ENCODE measurements at regions of chr11 and their contacts with region 1.

Region 1: DNA sequence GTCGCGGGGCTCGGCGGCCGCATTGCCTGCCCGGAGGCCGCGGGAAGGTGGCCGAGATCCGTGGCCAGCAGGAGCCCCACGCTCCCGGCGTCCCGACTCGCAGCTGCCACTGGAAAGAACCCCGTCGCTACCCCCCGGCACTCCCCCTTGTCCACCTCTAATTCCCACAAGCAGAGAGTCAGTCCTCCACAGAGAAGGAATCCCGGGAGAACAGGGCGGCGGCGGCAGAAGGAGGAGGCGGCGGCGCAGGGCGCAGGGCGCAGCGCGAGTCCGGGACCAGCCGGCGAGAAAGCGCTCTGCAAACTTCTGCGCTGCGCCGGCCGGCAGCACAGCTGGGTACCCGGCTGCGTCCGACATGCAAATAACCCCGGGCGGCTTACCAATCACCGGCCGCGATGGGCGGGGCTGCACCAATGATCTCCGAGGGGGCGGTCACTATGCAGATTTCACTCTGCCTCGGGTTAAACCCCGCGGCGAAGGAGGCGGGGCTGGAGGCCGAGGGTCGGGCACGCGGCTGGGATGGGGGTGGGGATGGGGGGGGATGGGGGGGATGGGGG is at the start of gene ABTB2:
- DNase-seq: peak; percentile 94 to 98 (median 97)
- ATAC-seq: peak; percentile 89
- H3K4me3 ChIP-seq: peak within 1 kb of the TSS; percentile 65 to 86
- H3K4me3 Mint-ChIP-seq: peak within 1 kb of the TSS; percentile 87
- H3K27ac ChIP-seq: peak within 1 kb of the TSS; percentile 21 to 38
- H3K27ac Mint-ChIP-seq: peak within 1 kb of the TSS; percentile 74
- H3K4me1 ChIP-seq: peaks cover 22% of the 10 kb centered on the region
- H3K4me1 Mint-ChIP-seq: peaks cover 19% of the 10 kb centered on the region
- H3K27me3 ChIP-seq: peaks cover 18 to 26% of the 10 kb centered on the region in 2 experiments
- H3K27me3 Mint-ChIP-seq: peaks cover 43% of the 10 kb centered on the region
- CTCF ChIP-seq: no peak
- total RNA-seq, gene ABTB2: 2.2 to 2.7 TPM

Region 2: DNA sequence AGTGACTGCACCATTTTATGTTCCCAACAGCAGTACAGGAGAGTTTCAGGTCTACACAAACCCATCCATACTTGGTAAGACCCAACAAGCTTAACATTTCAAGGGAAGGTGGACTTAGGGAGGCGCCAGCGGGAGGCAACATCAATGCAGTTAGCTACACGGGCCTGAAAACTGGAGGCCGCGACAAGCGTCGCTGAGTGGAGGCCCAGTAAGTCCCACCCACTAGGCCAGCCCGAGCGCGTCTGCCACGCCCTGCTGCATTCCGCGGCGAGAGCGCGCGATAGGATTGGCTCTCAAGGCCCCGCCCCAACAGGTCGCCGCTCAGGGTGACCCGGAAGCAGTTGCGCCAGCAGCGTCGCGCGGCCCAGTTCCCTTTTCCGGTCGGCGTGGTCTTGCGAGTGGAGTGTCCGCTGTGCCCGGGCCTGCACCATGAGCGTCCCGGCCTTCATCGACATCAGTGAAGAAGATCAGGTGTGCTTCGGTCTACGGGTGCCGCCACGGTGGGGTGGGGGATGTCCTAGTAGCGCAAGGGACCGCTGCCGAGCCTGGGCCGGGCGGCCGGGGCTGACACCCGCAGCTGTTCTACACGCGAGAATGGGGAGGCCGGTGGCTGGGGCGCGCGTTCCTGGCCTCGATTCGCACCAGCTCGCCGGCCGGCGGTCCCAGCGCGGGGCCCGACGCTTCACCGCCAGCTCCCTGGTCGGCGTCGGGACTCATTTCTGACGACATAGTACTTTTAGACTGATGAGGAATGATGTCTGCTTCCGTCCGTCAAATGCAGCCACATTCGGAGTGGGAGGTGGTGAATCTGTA is 1774.1 kb before region 1 on chr11 and contains the start of gene EIF3M:
- CTCF ChIA-PET with region 1: no interaction called
- POLR2A ChIA-PET with region 1: no interaction called
- intact Hi-C with region 1: loop called in 1 of 2 experiments (anchors 5 kb)
- DNase-seq: peak; percentile 91 to 98 (median 95)
- ATAC-seq: peak; percentile 98
- H3K4me3 ChIP-seq: peak within 1 kb of the TSS; percentile 80 to 93
- H3K4me3 Mint-ChIP-seq: peak within 1 kb of the TSS; percentile 99
- H3K27ac ChIP-seq: peak within 1 kb of the TSS; percentile 81 to 86
- H3K27ac Mint-ChIP-seq: peak within 1 kb of the TSS; percentile 99
- H3K4me1 ChIP-seq: peaks cover 29% of the 10 kb centered on the region
- H3K4me1 Mint-ChIP-seq: peaks cover 39% of the 10 kb centered on the region
- H3K27me3 ChIP-seq: no peaks in the 10 kb centered on the region
- H3K27me3 Mint-ChIP-seq: no peaks in the 10 kb centered on the region
- CTCF ChIP-seq: no peak
- total RNA-seq, gene EIF3M: 269 to 274 TPM

Region 3: GRCh38 chr11:33700425-33701271 is 657.1 kb before region 1 on chr11 and contains the start of gene C11orf91:
- CTCF ChIA-PET with region 1: no interaction called
- POLR2A ChIA-PET with region 1: no interaction called
- intact Hi-C with region 1: loop called in 1 of 2 experiments (anchors 10 kb)
- DNase-seq: peak; percentile 88 to 96 (median 94)
- ATAC-seq: peak; percentile 95
- H3K4me3 ChIP-seq: peak within 1 kb of the TSS; percentile 51 to 68
- H3K4me3 Mint-ChIP-seq: peak within 1 kb of the TSS; percentile 92
- H3K27ac ChIP-seq: no peak within 1 kb of the TSS
- H3K27ac Mint-ChIP-seq: peak within 1 kb of the TSS; percentile 64
- H3K4me1 ChIP-seq: peaks cover 13% of the 10 kb centered on the region
- H3K4me1 Mint-ChIP-seq: peaks cover 25% of the 10 kb centered on the region
- H3K27me3 ChIP-seq: no peaks in the 10 kb centered on the region
- H3K27me3 Mint-ChIP-seq: peaks cover 2% of the 10 kb centered on the region
- CTCF ChIP-seq: no peak
- total RNA-seq, gene C11orf91: 0.54 TPM in 1 of 2 experiments, not detected in the other

Region 4: DNA sequence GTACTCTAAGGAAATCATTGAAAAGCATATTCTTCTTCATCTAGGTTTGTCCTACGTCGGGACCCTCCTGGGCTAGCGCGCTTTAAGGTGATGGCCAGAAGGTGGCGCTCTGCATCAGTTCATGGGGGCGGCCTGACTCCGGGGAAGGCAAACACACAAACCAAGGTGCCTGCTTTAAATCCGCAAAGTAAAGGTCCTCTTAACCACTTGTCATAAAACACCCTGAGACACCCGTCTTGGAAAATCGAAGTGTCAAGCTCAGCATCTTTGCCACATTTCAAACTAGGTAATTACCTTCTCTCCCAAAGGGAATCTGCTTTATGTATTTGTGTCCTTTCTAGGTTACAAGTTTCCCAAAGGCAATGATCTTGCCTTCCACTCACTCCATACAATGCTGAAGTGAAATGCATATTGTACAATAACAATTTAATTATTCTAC is 499.8 kb before region 1 on chr11:
- CTCF ChIA-PET with region 1: interaction called, 5 read pairs
- POLR2A ChIA-PET with region 1: interaction called, 4 read pairs
- intact Hi-C with region 1: loop called (anchors 1 kb)
- DNase-seq: peak; percentile 43 to 82 (median 75)
- ATAC-seq: peak; percentile 87
- H3K4me3 ChIP-seq: no peak overlapping the region
- H3K4me3 Mint-ChIP-seq: no peak overlapping the region
- H3K27ac ChIP-seq: no peak overlapping the region
- H3K27ac Mint-ChIP-seq: no peak overlapping the region
- H3K4me1 ChIP-seq: no peaks in the 10 kb centered on the region
- H3K4me1 Mint-ChIP-seq: no peaks in the 10 kb centered on the region
- H3K27me3 ChIP-seq: peaks cover 6 to 7% of the 10 kb centered on the region in 2 experiments
- H3K27me3 Mint-ChIP-seq: peaks cover 50% of the 10 kb centered on the region
- CTCF ChIP-seq: peak; percentile 81

Region 5: GRCh38 chr11:34105079-34105956 is 252.5 kb before region 1 on chr11 and contains the start of gene NAT10:
- CTCF ChIA-PET with region 1: no interaction called
- POLR2A ChIA-PET with region 1: no interaction called
- intact Hi-C with region 1: loop called in 1 of 2 experiments (anchors 1 kb)
- DNase-seq: peak; percentile 93 to 100 (median 98)
- ATAC-seq: peak; percentile 93
- H3K4me3 ChIP-seq: peak within 1 kb of the TSS; percentile 70 to 94
- H3K4me3 Mint-ChIP-seq: peak within 1 kb of the TSS; percentile 97
- H3K27ac ChIP-seq: peak within 1 kb of the TSS; percentile 81 to 90
- H3K27ac Mint-ChIP-seq: peak within 1 kb of the TSS; percentile 99
- H3K4me1 ChIP-seq: peaks cover 27% of the 10 kb centered on the region
- H3K4me1 Mint-ChIP-seq: peaks cover 60% of the 10 kb centered on the region
- H3K27me3 ChIP-seq: no peaks in the 10 kb centered on the region
- H3K27me3 Mint-ChIP-seq: no peaks in the 10 kb centered on the region
- CTCF ChIP-seq: no peak
- total RNA-seq, gene NAT10: 51.1 to 59.6 TPM

Region 6: GRCh38 chr11:34234086-34234740 is 123.6 kb before region 1 on chr11:
- CTCF ChIA-PET with region 1: no interaction called
- POLR2A ChIA-PET with region 1: interaction called, 5 read pairs
- intact Hi-C with region 1: loop called in 1 of 2 experiments (anchors 1 kb)
- DNase-seq: peak; percentile 30 to 91 (median 74)
- ATAC-seq: peak; percentile 99
- H3K4me3 ChIP-seq: no peak overlapping the region
- H3K4me3 Mint-ChIP-seq: no peak overlapping the region
- H3K27ac ChIP-seq: no peak overlapping the region
- H3K27ac Mint-ChIP-seq: peak overlapping the region; percentile 60
- H3K4me1 ChIP-seq: peaks cover 9% of the 10 kb centered on the region
- H3K4me1 Mint-ChIP-seq: peaks cover 16% of the 10 kb centered on the region
- H3K27me3 ChIP-seq: no peaks in the 10 kb centered on the region
- H3K27me3 Mint-ChIP-seq: no peaks in the 10 kb centered on the region
- CTCF ChIP-seq: no peak

Region 7: GRCh38 chr11:34438529-34439507 is 81.0 kb after region 1 on chr11 and contains the start of gene CAT:
- CTCF ChIA-PET with region 1: no interaction called
- POLR2A ChIA-PET with region 1: no interaction called
- intact Hi-C with region 1: loop called (anchors 1 to 2 kb)
- DNase-seq: peak; percentile 96 to 98 (median 97)
- ATAC-seq: peak; percentile 94
- H3K4me3 ChIP-seq: peak within 1 kb of the TSS; percentile 97 to 98
- H3K4me3 Mint-ChIP-seq: peak within 1 kb of the TSS; percentile 94
- H3K27ac ChIP-seq: peak within 1 kb of the TSS; percentile 80 to 81
- H3K27ac Mint-ChIP-seq: peak within 1 kb of the TSS; percentile 96
- H3K4me1 ChIP-seq: peaks cover 18% of the 10 kb centered on the region
- H3K4me1 Mint-ChIP-seq: peaks cover 49% of the 10 kb centered on the region
- H3K27me3 ChIP-seq: no peaks in the 10 kb centered on the region
- H3K27me3 Mint-ChIP-seq: no peaks in the 10 kb centered on the region
- CTCF ChIP-seq: no peak
- total RNA-seq, gene CAT: 8.2 to 8.7 TPM

Measured in CD8-positive, alpha-beta T cell (primary cell).